Naive thymus-derived CD4-positive, alpha-beta T cell (primary cell): ENCODE measurements at regions of chr7 and their contacts with region 1.

Region 1: GRCh38 chr7:89622838-89623672 is 531.2 kb upstream of the STEAP1 start:
- DNase-seq: peak in 7 of 9 donors; percentile 23 to 61 (median 53)
- ATAC-seq: peak; percentile 82
- H3K4me3 ChIP-seq: no peak overlapping the region
- H3K4me3 Mint-ChIP-seq: peak overlapping the region in 9 of 10 donors; percentile 21 to 70 (median 49)
- H3K27ac ChIP-seq: no peak overlapping the region
- H3K27ac Mint-ChIP-seq: peak overlapping the region in 5 of 9 donors; percentile 6 to 80 (median 35)
- H3K4me1 ChIP-seq: peaks cover 0 to 16% of the 10 kb centered on the region in 2 donors
- H3K4me1 Mint-ChIP-seq: peaks cover 18 to 40% (median 35%) of the 10 kb centered on the region in 7 donors
- H3K27me3 ChIP-seq: no peaks in the 10 kb centered on the region
- H3K27me3 Mint-ChIP-seq: peaks cover 0 to 7% (median 0%) of the 10 kb centered on the region in 5 donors

Region 2: GRCh38 chr7:88243345-88243909 is 1379.6 kb before region 1 on chr7:
- CTCF ChIA-PET with region 1: no interaction called
- POLR2A ChIA-PET with region 1: no interaction called
- intact Hi-C with region 1: loop called in 1 of 2 experiments (anchors 5 kb)
- DNase-seq: peak in 4 of 9 donors; percentile 4 to 13 (median 12)
- ATAC-seq: peak; percentile 77
- H3K4me3 ChIP-seq: no peak overlapping the region
- H3K4me3 Mint-ChIP-seq: no peak overlapping the region
- H3K27ac ChIP-seq: no peak overlapping the region
- H3K27ac Mint-ChIP-seq: no peak overlapping the region
- H3K4me1 ChIP-seq: no peaks in the 10 kb centered on the region
- H3K4me1 Mint-ChIP-seq: no peaks in the 10 kb centered on the region
- H3K27me3 ChIP-seq: no peaks in the 10 kb centered on the region
- H3K27me3 Mint-ChIP-seq: peaks cover 0 to 23% (median 13%) of the 10 kb centered on the region in 5 donors

Region 3: DNA sequence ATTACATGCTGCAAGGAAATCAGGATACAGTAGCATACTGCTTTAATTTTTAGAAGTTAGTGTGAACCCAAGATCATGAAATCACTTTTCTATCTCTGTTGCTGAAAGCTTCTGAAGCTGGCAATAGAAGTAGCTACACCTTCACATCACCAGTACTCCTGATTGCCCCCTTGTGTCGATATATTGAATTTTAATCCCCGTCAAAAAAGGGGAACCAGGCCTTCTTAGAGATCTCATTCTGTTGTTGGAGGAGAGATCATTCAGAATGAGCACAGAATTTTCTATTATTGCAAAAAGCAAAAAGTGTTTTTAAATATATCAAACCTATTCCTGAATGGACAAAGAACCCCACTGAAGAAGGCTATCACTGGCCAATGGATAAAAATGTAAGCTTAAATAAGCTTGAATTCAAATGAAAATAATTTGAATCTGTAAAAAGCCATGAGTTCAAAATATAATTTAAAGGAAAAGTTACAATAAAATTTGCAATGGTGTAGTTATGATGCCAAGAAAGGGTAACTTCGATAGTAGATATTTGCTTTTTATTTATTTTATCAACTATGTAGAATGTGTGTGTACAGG is 787.8 kb before region 1 on chr7:
- CTCF ChIA-PET with region 1: interaction called, 3 read pairs
- POLR2A ChIA-PET with region 1: no interaction called
- intact Hi-C with region 1: loop called in 1 of 2 experiments (anchors 2 kb)
- DNase-seq: peak in 1 of 9 donors; percentile 2
- ATAC-seq: no peak
- H3K4me3 ChIP-seq: no peak overlapping the region
- H3K4me3 Mint-ChIP-seq: no peak overlapping the region
- H3K27ac ChIP-seq: no peak overlapping the region
- H3K27ac Mint-ChIP-seq: no peak overlapping the region
- H3K4me1 ChIP-seq: no peaks in the 10 kb centered on the region
- H3K4me1 Mint-ChIP-seq: no peaks in the 10 kb centered on the region
- H3K27me3 ChIP-seq: no peaks in the 10 kb centered on the region
- H3K27me3 Mint-ChIP-seq: no peaks in the 10 kb centered on the region

Region 4: DNA sequence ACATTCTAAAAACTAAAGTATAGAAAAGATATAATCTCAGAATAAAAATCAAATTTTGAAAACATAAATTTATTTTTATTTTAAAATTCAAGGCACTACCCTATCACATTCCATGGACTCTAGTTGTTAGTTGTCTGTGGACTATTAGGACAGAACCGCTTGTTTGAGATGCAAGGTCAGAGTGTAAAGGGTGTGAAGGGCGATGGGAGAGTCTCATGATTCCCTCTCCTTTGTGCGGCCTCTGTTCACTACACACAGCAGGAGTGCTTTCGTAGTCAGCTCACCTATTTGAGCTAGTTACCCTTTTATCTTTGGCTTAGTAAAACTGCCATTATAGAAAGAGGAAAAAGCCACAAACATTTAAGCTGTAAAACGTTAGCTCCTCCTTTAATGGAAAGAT is 637.8 kb before region 1 on chr7:
- CTCF ChIA-PET with region 1: no interaction called
- POLR2A ChIA-PET with region 1: no interaction called
- intact Hi-C with region 1: loop called in 1 of 2 experiments (anchors 2 kb)
- DNase-seq: no peak
- ATAC-seq: no peak
- H3K4me3 ChIP-seq: no peak overlapping the region
- H3K4me3 Mint-ChIP-seq: no peak overlapping the region
- H3K27ac ChIP-seq: no peak overlapping the region
- H3K27ac Mint-ChIP-seq: no peak overlapping the region
- H3K4me1 ChIP-seq: no peaks in the 10 kb centered on the region
- H3K4me1 Mint-ChIP-seq: no peaks in the 10 kb centered on the region
- H3K27me3 ChIP-seq: no peaks in the 10 kb centered on the region
- H3K27me3 Mint-ChIP-seq: peaks cover 0 to 18% (median 4%) of the 10 kb centered on the region in 5 donors

Region 5: GRCh38 chr7:89145801-89146200 is 477.3 kb before region 1 on chr7:
- CTCF ChIA-PET with region 1: no interaction called
- POLR2A ChIA-PET with region 1: no interaction called
- intact Hi-C with region 1: loop called in 1 of 2 experiments (anchors 5 kb)
- DNase-seq: no peak
- ATAC-seq: no peak
- H3K4me3 ChIP-seq: no peak overlapping the region
- H3K4me3 Mint-ChIP-seq: no peak overlapping the region
- H3K27ac ChIP-seq: no peak overlapping the region
- H3K27ac Mint-ChIP-seq: no peak overlapping the region
- H3K4me1 ChIP-seq: no peaks in the 10 kb centered on the region
- H3K4me1 Mint-ChIP-seq: peaks cover 0 to 2% (median 0%) of the 10 kb centered on the region in 7 donors
- H3K27me3 ChIP-seq: no peaks in the 10 kb centered on the region
- H3K27me3 Mint-ChIP-seq: peaks cover 0 to 5% (median 0%) of the 10 kb centered on the region in 5 donors

Region 6: GRCh38 chr7:89308535-89308934 is 314.5 kb before region 1 on chr7:
- CTCF ChIA-PET with region 1: no interaction called
- POLR2A ChIA-PET with region 1: no interaction called
- intact Hi-C with region 1: no loop called
- DNase-seq: no peak
- ATAC-seq: no peak
- H3K4me3 ChIP-seq: no peak overlapping the region
- H3K4me3 Mint-ChIP-seq: no peak overlapping the region
- H3K27ac ChIP-seq: no peak overlapping the region
- H3K27ac Mint-ChIP-seq: no peak overlapping the region
- H3K4me1 ChIP-seq: no peaks in the 10 kb centered on the region
- H3K4me1 Mint-ChIP-seq: no peaks in the 10 kb centered on the region
- H3K27me3 ChIP-seq: no peaks in the 10 kb centered on the region
- H3K27me3 Mint-ChIP-seq: peaks cover 0 to 4% (median 0%) of the 10 kb centered on the region in 5 donors

Region 7: DNA sequence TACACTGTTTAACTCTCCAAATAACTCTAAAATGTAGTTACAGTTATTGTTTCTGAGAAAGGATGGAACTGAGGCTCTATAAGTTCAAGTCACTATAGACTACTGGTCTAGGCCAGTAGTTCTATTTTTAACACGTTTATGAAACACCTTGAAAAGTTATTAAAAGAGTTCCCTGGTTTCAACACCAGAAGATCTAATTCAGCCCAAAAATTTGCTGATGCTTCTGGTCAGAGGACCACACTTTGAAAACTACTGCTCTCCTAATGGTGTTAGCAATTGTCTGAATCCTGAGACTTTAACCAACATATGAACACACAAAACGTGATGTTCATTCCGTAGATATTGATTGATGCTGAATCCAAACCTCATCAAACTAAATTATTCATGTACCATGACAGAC is 127.4 kb before region 1 on chr7:
- CTCF ChIA-PET with region 1: no interaction called
- POLR2A ChIA-PET with region 1: no interaction called
- intact Hi-C with region 1: loop called in 1 of 2 experiments (anchors 5 kb)
- DNase-seq: no peak
- ATAC-seq: no peak
- H3K4me3 ChIP-seq: no peak overlapping the region
- H3K4me3 Mint-ChIP-seq: no peak overlapping the region
- H3K27ac ChIP-seq: no peak overlapping the region
- H3K27ac Mint-ChIP-seq: no peak overlapping the region
- H3K4me1 ChIP-seq: no peaks in the 10 kb centered on the region
- H3K4me1 Mint-ChIP-seq: peaks cover 0 to 4% (median 1%) of the 10 kb centered on the region in 7 donors
- H3K27me3 ChIP-seq: no peaks in the 10 kb centered on the region
- H3K27me3 Mint-ChIP-seq: no peaks in the 10 kb centered on the region

Region 8: DNA sequence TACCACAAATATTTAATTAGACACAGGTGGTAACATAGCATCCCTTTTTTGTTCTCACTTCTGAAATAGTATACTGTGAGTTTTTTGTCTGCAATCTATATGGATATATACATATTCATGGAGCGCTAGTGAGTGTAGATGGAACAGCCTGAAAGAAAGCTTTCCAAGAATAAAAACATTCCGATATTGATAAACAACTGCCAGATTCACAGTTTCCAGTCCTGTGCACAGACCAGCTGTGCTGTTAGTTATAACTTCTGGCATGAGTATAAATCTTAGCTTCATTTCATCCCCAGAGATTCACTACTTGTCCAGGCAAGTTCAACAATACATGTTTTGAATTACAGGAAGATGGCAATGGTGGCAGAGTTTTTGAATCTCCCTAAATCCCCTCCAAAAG is 64.2 kb after region 1 on chr7:
- CTCF ChIA-PET with region 1: no interaction called
- POLR2A ChIA-PET with region 1: no interaction called
- intact Hi-C with region 1: no loop called
- DNase-seq: no peak
- ATAC-seq: no peak
- H3K4me3 ChIP-seq: no peak overlapping the region
- H3K4me3 Mint-ChIP-seq: no peak overlapping the region
- H3K27ac ChIP-seq: no peak overlapping the region
- H3K27ac Mint-ChIP-seq: no peak overlapping the region
- H3K4me1 ChIP-seq: no peaks in the 10 kb centered on the region
- H3K4me1 Mint-ChIP-seq: no peaks in the 10 kb centered on the region
- H3K27me3 ChIP-seq: no peaks in the 10 kb centered on the region
- H3K27me3 Mint-ChIP-seq: peaks cover 0 to 5% (median 0%) of the 10 kb centered on the region in 5 donors

Region 9: DNA sequence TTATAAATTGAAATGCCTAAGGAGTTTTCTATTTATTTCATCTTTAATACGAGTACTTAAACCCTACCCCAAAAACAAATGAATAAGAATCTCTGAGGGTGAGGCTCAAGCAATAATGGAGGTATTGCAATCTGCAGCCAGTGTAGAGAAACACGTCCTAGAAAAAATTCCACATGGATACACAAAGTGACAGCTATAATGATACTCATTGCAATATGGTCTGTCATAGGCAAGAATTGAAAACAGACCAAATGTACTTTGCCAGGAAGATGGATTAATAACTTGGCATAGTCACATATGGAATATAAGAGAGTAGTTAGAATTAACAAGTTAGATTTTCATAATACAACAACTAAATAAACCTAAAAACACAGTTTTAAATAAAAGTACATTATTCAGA is 91.1 kb after region 1 on chr7:
- CTCF ChIA-PET with region 1: no interaction called
- POLR2A ChIA-PET with region 1: no interaction called
- intact Hi-C with region 1: no loop called
- DNase-seq: no peak
- ATAC-seq: no peak
- H3K4me3 ChIP-seq: no peak overlapping the region
- H3K4me3 Mint-ChIP-seq: no peak overlapping the region
- H3K27ac ChIP-seq: no peak overlapping the region
- H3K27ac Mint-ChIP-seq: no peak overlapping the region
- H3K4me1 ChIP-seq: no peaks in the 10 kb centered on the region
- H3K4me1 Mint-ChIP-seq: no peaks in the 10 kb centered on the region
- H3K27me3 ChIP-seq: no peaks in the 10 kb centered on the region
- H3K27me3 Mint-ChIP-seq: peaks cover 0 to 4% (median 0%) of the 10 kb centered on the region in 5 donors